Posterior vena cava (tissue), 2 donors: ENCODE measurements at regions of chr7 and their contacts with region 1.

Region 1: GRCh38 chr7:73451780-73452398 is 18.3 kb downstream of the FZD9 start:
- DNase-seq: no peak

Region 2: GRCh38 chr7:73342645-73343044 is 109.2 kb before region 1 on chr7:
- intact Hi-C with region 1: loop called in 1 of 2 experiments (anchors 5 kb)
- DNase-seq: no peak

Region 3: GRCh38 chr7:73418113-73418703 is 33.7 kb before region 1 on chr7:
- intact Hi-C with region 1: no loop called
- DNase-seq: no peak

Region 4: GRCh38 chr7:73647725-73648592 is 196.1 kb after region 1 on chr7:
- intact Hi-C with region 1: no loop called
- DNase-seq: no peak